Breast epithelium (tissue), 4 donors: ENCODE measurements at regions of chr19 and their contacts with region 1.

Region 1: GRCh38 chr19:40474737-40475136 is 7.9 kb downstream of the SPTBN4 start:
- DNase-seq: no peak
- H3K4me3 ChIP-seq: no peak overlapping the region
- H3K27ac ChIP-seq: no peak overlapping the region
- H3K4me1 ChIP-seq: no peaks in the 10 kb centered on the region
- H3K27me3 ChIP-seq: no peaks in the 10 kb centered on the region
- CTCF ChIP-seq: no peak
- POLR2A ChIP-seq: no peak

Region 2: DNA sequence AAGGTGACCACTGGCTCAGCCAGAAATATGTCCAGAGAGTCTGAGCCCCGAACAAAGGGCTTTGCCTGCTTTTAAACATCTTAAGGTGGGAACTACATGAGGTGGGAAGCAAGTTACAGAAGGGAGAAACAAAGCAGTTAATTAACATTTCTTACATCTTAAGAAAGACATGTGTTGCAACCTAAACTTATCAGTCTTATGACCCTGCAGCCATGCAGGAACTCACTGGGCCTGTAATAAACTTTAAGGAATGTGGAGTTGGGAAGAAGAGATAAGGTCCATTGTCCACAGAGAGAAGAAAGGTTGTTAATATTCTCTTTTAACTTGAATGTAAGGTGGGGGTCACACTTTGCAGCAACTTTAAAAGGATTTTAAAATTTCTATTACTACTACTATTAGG is 454.1 kb after region 1 on chr19:
- intact Hi-C with region 1: loop called (anchors 5 kb)
- DNase-seq: no peak
- H3K4me3 ChIP-seq: no peak overlapping the region
- H3K27ac ChIP-seq: no peak overlapping the region
- H3K4me1 ChIP-seq: no peaks in the 10 kb centered on the region
- H3K27me3 ChIP-seq: no peaks in the 10 kb centered on the region
- CTCF ChIP-seq: no peak
- POLR2A ChIP-seq: no peak